Mammary epithelial cell (primary cell): ENCODE measurements at regions of chr17 and their contacts with region 1.

Region 1: GRCh38 chr17:10987786-10988185 is 149.9 kb upstream of the PIRT start:
- DNase-seq: no peak
- H3K4me3 ChIP-seq: no peak overlapping the region
- H3K27ac ChIP-seq: no peak overlapping the region
- H3K4me1 ChIP-seq: no peaks in the 10 kb centered on the region
- H3K27me3 ChIP-seq: no peaks in the 10 kb centered on the region
- CTCF ChIP-seq: no peak

Region 2: GRCh38 chr17:10357768-10358167 is 630.0 kb before region 1 on chr17:
- CTCF ChIA-PET with region 1: no interaction called
- dilution Hi-C with region 1: no loop called
- in situ Hi-C with region 1: no loop called
- intact Hi-C with region 1: no loop called
- DNase-seq: no peak
- H3K4me3 ChIP-seq: no peak overlapping the region
- H3K27ac ChIP-seq: no peak overlapping the region
- H3K4me1 ChIP-seq: no peaks in the 10 kb centered on the region
- H3K27me3 ChIP-seq: no peaks in the 10 kb centered on the region
- CTCF ChIP-seq: peak in 1 of 2 donors; percentile 15

Region 3: DNA sequence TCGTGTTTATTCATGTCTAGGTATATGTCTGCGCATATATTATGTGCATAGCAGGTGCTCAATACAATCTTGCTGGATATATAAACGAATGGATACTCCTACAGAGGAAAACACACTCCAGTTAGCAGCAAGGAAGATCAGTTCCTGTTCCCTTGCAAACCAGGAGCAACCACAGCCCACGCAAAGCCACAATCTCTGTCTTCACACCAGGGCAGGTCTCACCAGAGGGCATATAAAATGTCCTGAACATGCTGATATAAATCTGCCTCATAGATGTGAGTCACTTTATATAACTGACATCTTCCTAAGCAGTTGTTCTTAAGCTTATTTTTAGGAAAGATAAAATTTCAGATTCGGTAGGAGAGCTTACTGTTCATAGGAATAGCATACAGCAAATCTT is 48.4 kb before region 1 on chr17:
- CTCF ChIA-PET with region 1: no interaction called
- dilution Hi-C with region 1: loop called (anchors 5 kb)
- in situ Hi-C with region 1: no loop called
- intact Hi-C with region 1: no loop called
- DNase-seq: no peak
- H3K4me3 ChIP-seq: no peak overlapping the region
- H3K27ac ChIP-seq: no peak overlapping the region
- H3K4me1 ChIP-seq: no peaks in the 10 kb centered on the region
- H3K27me3 ChIP-seq: no peaks in the 10 kb centered on the region
- CTCF ChIP-seq: no peak

Region 4: GRCh38 chr17:11178581-11178980 is 190.8 kb after region 1 on chr17:
- CTCF ChIA-PET with region 1: no interaction called
- dilution Hi-C with region 1: no loop called
- in situ Hi-C with region 1: no loop called
- intact Hi-C with region 1: no loop called
- DNase-seq: no peak
- H3K4me3 ChIP-seq: no peak overlapping the region
- H3K27ac ChIP-seq: no peak overlapping the region
- H3K4me1 ChIP-seq: no peaks in the 10 kb centered on the region
- H3K27me3 ChIP-seq: no peaks in the 10 kb centered on the region
- CTCF ChIP-seq: no peak